Prostate gland (tissue), 2 donors: ENCODE measurements at regions of chr19 and their contacts with region 1.

Region 1: DNA sequence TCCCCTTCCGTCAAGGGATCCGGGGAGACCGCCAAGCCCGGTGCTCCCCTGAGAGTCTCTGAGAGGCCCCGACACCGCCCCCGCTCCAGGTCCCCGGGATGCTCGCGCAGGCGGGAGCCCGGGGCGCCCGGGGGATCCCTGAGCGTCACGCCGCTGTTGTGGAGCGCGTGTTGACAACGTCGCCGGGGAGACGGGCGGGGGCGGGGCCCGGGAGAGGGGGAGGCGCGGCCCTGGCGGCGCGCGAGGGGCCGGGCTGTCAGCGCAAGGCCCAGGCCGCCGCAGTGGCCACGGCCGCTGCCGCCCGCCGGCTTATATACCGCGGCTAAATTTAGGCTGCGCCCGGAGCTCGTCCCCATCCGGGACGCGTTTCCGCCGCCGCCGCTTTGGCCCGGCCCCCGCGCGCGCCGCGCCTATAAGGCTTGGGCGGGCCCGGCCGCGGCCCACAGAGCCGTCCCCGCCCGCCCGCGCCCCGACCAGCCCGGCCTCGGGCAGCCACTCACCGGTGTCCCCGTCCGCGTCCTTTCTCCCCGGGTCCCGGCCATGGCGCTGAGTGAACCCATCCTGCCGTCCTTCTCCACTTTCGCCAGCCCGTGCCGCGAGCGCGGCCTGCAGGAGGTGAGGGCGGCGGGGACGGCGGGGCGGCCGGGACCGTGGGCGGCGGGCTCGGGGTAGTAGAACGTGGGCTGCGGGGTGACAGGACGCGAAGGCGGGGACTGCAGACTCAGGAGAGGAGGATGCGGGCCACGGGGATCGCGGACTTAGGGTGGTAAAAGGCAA is at the start of gene KLF2:
- DNase-seq: peak; percentile 81
- H3K4me3 ChIP-seq: peak within 1 kb of the TSS; percentile 67 to 68
- H3K27ac ChIP-seq: peak within 1 kb of the TSS; percentile 82 to 89
- H3K4me1 ChIP-seq: no peaks in the 10 kb centered on the region
- H3K27me3 ChIP-seq: no peaks in the 10 kb centered on the region
- CTCF ChIP-seq: peak in 1 of 4 experiments; percentile 6
- POLR2A ChIP-seq: peak; percentile 72
- total RNA-seq, gene KLF2: 19.8 to 24.4 TPM

Region 2: DNA sequence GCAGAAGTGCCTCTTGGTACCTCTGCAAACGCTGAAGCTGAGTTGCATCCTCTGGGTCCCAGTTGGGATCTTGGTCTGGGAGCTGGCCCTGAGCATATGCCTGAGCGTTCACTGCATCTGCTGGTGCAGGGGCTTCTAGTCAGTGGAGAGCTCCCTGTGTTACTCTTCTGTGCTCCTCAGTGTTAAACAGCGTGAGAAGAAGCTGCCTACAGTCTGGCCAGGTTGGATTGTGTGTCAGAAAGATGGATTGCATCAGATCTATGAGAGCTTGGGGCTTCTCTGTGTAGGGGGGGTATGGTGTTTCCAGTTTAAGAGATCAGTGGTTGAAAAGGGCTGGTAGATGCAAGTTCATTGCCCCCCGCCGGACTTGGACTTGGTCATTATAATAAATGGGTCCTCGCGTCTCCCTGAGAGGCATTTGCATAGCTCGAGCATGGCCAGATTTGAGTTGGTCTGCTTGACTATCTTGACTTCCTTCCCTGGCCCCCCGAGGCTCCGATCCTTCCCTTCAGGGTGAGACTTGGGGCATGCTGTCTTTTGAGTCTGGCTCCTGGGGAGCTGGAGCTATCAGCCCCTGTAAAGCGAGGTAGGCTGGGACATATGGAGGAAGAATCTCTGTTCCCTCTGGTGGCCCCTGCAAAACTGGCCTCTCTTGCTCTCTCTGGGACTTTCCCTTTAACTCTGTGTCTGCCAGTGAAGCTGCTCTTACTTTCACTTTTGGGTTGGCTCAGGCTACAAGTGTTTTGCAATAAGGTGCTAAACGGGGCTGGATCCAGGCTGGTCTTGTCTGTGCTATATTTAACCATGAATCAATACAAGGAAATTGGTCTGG is 322.9 kb before region 1 on chr19:
- intact Hi-C with region 1: no loop called
- DNase-seq: peak; percentile 15
- H3K4me3 ChIP-seq: peak overlapping the region; percentile 1 to 17
- H3K27ac ChIP-seq: peak overlapping the region in 1 of 2 donors; percentile 25
- H3K4me1 ChIP-seq: no peaks in the 10 kb centered on the region
- H3K27me3 ChIP-seq: no peaks in the 10 kb centered on the region
- CTCF ChIP-seq: no peak
- POLR2A ChIP-seq: no peak

Region 3: DNA sequence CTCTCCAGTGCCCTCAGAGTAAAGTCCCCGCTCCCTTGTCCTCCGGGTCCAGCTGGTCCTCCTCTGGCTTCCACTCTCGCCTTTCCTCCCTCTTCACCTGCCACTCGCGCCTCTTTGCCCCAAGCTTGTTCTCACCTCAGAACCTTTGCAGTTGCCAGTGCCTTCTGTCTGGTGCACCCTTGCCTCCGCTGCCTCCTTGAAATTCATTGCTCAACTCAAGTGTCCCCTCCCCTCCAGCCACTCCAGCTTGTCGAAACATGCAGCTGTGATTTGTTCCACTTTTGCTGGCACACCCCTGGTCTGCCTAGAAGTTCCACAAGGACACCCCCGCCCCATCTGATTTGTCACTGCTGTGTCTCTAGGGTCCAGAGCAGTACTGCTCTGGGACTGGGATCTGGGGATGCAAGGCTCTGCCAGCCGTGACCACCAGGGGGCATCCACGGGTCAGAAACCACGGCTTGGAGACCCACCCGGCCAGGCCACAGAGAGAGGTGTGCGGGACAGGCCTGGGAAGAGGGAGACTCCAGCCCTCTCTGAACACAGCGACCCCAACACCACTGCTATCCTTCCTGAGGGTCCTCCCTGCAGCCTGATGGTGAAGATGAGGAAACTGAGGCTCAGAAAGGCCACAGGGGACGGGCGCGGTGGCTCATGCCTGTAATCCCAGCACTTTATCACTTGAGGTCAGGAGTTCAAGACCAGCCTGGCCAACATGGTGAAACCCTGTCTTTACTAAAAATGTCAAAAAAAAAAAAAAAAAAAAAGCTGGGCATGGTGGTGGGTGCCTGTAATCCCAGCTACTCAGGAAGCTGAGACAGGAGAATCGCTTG is 77.0 kb before region 1 on chr19:
- intact Hi-C with region 1: loop called (anchors 5 kb)
- DNase-seq: peak; percentile 66
- H3K4me3 ChIP-seq: no peak overlapping the region
- H3K27ac ChIP-seq: no peak overlapping the region
- H3K4me1 ChIP-seq: no peaks in the 10 kb centered on the region
- H3K27me3 ChIP-seq: no peaks in the 10 kb centered on the region
- CTCF ChIP-seq: peak; percentile 92 to 96 (median 94)
- POLR2A ChIP-seq: no peak

Region 4: DNA sequence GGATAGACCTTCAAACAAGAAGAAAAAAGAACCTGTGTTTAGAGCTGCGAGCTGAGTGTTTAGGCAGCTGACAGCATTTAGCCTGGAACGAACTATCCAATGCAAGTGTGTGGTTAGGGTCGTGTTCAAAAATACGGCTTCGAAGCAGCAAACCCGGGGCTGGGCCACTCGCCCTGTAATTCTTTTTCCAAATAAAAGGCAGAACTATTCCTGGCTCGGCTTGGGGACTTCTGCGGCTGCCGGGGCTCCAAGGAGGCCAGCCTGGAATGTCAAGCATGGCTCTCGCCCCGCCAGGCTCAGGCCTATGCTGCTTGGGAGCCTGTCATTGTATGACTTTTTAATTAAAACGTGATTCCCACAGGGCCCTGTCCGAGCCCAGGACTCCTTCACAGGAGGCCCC is 51.6 kb before region 1 on chr19:
- intact Hi-C with region 1: no loop called
- DNase-seq: no peak
- H3K4me3 ChIP-seq: no peak overlapping the region
- H3K27ac ChIP-seq: peak overlapping the region; percentile 20 to 23
- H3K4me1 ChIP-seq: no peaks in the 10 kb centered on the region
- H3K27me3 ChIP-seq: no peaks in the 10 kb centered on the region
- CTCF ChIP-seq: no peak
- POLR2A ChIP-seq: no peak

Region 5: GRCh38 chr19:16285769-16286498 is 38.6 kb before region 1 on chr19:
- intact Hi-C with region 1: loop called (anchors 5 kb)
- DNase-seq: no peak
- H3K4me3 ChIP-seq: no peak overlapping the region
- H3K27ac ChIP-seq: peak overlapping the region; percentile 52 to 67
- H3K4me1 ChIP-seq: no peaks in the 10 kb centered on the region
- H3K27me3 ChIP-seq: no peaks in the 10 kb centered on the region
- CTCF ChIP-seq: no peak
- POLR2A ChIP-seq: no peak

Region 6: GRCh38 chr19:16382775-16383543 is 58.4 kb after region 1 on chr19:
- intact Hi-C with region 1: loop called (anchors 2 kb)
- DNase-seq: peak; percentile 80
- H3K4me3 ChIP-seq: no peak overlapping the region
- H3K27ac ChIP-seq: peak overlapping the region; percentile 51 to 55
- H3K4me1 ChIP-seq: no peaks in the 10 kb centered on the region
- H3K27me3 ChIP-seq: no peaks in the 10 kb centered on the region
- CTCF ChIP-seq: peak; percentile 53 to 92 (median 86)
- POLR2A ChIP-seq: no peak

Region 7: GRCh38 chr19:16470911-16471811 is 146.6 kb after region 1 on chr19:
- intact Hi-C with region 1: no loop called
- DNase-seq: no peak
- H3K4me3 ChIP-seq: peak overlapping the region; percentile 78 to 97
- H3K27ac ChIP-seq: peak overlapping the region; percentile 61 to 87
- H3K4me1 ChIP-seq: peaks cover 4% of the 10 kb centered on the region
- H3K27me3 ChIP-seq: no peaks in the 10 kb centered on the region
- CTCF ChIP-seq: no peak
- POLR2A ChIP-seq: no peak